ENCODE measurements at regions of chr7 and their contacts with region 1.

Region 1: DNA sequence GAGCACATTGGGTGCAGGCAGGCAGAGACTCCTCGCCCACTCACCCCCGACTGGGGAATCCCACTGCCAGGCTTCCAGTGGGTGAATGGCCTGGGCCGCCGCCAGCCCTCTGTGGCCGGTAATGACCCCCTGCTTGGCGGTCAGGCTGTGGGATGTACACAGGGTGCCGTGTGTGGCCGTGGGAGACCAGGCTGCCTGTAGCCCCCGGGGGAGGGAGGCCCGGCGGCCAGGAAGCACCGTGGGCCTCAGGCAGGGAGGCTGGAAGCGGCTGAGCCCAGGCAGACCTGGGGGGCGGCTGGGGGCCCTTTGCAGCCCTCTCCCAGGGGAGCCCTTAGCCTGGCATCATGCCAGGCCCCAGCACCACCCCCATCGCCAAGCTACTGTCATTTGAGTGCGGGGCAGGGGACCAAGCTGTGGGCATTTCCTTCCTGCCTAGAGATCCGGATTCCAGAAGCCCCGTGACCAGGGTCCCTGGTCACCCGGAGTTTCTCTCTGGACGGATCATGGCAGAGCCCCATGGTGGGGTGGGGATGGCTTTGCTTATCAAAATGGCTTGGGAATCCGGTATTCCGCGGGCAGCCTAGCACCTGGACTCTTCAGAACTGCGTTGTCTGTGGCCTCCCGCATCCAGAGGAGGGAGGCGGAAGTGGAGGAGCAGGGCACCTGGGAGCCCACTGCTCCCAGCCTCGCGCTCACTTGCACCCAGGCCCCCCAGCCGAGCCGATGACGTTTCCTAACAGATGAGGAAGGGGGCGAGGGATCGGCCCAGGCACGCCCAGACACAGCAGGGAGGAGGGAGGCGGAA is 1.1 kb downstream of the TTYH3 start:
- DNase-seq: peak in 9 of 10 donors; percentile 19 to 50 (median 37)
- ATAC-seq: peak; percentile 13 to 31
- H3K4me3 Mint-ChIP-seq: peak overlapping the region; percentile 85 to 94 (median 90)
- H3K27ac Mint-ChIP-seq: peak overlapping the region; percentile 19 to 93 (median 80)
- H3K4me1 Mint-ChIP-seq: peaks cover 11 to 32% (median 23%) of the 10 kb centered on the region in 4 donors
- H3K27me3 Mint-ChIP-seq: no peaks in the 10 kb centered on the region

Region 2: DNA sequence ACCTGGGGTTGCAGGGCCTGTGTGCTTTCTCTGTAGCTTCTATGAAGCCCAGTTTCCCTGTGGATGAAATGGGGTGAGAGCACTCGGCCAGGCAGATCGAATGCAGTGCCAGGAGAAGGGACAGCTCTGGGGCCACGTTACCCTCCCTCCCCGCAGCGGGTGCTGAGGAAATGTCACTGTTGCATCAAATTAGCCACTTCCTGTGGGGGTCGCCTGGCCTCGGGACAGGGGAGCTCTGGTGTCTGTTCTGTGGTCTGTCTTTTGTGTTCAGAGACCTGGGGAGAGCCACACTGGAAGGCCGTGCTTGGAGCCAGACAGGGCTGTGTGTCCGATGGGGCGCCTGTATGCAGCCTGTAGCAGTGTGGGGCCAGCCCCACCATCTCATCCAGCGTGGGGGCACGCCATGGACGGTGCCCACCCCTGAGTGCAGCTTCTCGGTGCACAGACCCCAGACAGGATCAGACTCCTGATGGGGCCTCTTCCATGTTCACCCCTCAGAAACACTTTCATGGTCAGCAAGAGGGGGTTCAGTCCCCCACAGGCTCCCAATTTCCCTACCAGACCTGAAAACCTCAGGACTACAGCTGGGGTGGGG is 12.4 kb after region 1 on chr7:
- POLR2A ChIA-PET with region 1: interaction called, 21 read pairs
- DNase-seq: peak in 7 of 10 donors; percentile 29 to 59 (median 39)
- ATAC-seq: peak; percentile 71 to 76
- H3K4me3 Mint-ChIP-seq: peak overlapping the region; percentile 79 to 92 (median 85)
- H3K27ac Mint-ChIP-seq: peak overlapping the region; percentile 53 to 94 (median 83)
- H3K4me1 Mint-ChIP-seq: peaks cover 14 to 37% (median 26%) of the 10 kb centered on the region in 4 donors
- H3K27me3 Mint-ChIP-seq: no peaks in the 10 kb centered on the region

Measured in naive thymus-derived CD8-positive, alpha-beta T cell (primary cell).